Motor neuron (in vitro differentiated cells): ENCODE measurements at regions of chr4 and their contacts with region 1.

Region 1: DNA sequence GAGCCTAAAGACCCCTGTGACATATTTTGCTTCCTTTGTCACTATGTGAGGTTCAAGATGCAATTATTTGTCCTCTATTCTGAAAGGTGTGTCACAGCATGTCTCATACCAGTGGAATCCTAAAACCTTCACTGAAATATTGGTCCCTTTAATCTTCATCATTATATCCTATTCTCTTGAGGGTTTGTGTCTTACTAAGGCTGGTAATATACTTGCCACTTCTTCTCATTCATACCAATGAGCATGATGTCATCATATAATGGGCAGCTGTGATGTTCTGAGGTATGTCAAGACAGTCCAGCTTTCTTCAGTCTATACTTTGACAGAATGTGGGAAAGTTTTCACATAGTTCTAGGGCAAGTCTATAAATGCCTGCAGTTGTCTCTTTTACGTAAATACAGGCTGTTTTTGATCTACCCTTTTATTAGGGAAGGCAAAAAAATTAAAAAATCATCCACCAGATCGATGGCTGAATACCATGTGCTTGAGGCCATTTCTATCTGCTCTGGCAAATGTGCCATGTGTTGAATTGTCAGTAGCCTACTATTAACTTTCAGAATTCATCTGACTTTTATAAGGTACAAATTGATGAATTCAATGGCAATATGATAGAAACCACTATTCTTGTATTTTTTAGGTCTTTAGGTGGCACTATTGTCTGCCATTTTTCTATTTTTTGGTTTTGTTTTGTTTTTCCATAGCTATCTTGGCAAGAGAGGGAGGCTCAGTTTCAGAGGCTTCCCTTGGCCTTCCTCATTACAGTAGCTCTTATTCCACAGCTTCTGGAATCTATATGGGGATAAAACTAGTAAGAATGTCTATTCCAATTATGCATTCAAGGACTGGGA is 209.0 kb downstream of the PPARGC1A start:
- ATAC-seq: peak in 1 of 8 experiments; percentile 41
- H3K4me3 ChIP-seq: no peak overlapping the region
- H3K27ac ChIP-seq: no peak overlapping the region
- H3K4me1 ChIP-seq: peaks cover 0 to 2% of the 10 kb centered on the region in 2 donors

Region 2: GRCh38 chr4:24433515-24434214 is 752.8 kb after region 1 on chr4:
- in situ Hi-C with region 1: loop called in 1 of 9 experiments (anchors 25 kb)
- ATAC-seq: no peak
- H3K4me3 ChIP-seq: no peak overlapping the region
- H3K27ac ChIP-seq: no peak overlapping the region
- H3K4me1 ChIP-seq: no peaks in the 10 kb centered on the region